Activated B cell treated with CpG ODN at 0.5 μM for 24 hours (primary cell): ENCODE measurements at regions of chr4 and their contacts with region 1.

Region 1: GRCh38 chr4:102535398-102536082 is 34.4 kb downstream of the NFKB1 start:
- DNase-seq: no peak
- ATAC-seq: peak; percentile 82
- H3K4me3 Mint-ChIP-seq: peak overlapping the region; percentile 55
- H3K27ac Mint-ChIP-seq: peak overlapping the region; percentile 71
- H3K4me1 Mint-ChIP-seq: peaks cover 40% of the 10 kb centered on the region
- H3K27me3 Mint-ChIP-seq: no peaks in the 10 kb centered on the region
- CTCF ChIP-seq: no peak

Region 2: DNA sequence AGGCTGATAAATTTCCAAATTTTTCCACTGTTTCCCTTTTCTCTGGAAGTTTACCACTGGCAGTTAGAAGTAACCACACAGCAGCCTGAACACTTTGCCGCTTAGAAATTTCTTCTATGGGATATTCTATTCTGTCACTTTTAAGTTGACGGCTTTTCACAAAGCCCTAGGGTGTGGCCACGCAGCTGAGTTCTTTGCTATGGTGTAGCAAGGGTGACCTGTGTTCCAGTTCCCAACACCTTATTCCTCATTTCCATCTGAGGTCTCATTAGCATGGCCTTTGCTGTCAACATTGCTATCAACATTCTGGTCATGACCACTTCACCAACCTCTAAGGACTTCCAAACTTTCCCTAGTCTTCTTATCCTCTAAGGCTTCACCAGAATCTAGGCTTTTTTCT is 79.8 kb before region 1 on chr4:
- CTCF ChIA-PET with region 1: no interaction called
- POLR2A ChIA-PET with region 1: no interaction called
- intact Hi-C with region 1: no loop called
- DNase-seq: no peak
- ATAC-seq: no peak
- H3K4me3 Mint-ChIP-seq: no peak overlapping the region
- H3K27ac Mint-ChIP-seq: no peak overlapping the region
- H3K4me1 Mint-ChIP-seq: peaks cover 12% of the 10 kb centered on the region
- H3K27me3 Mint-ChIP-seq: peaks cover 3% of the 10 kb centered on the region
- CTCF ChIP-seq: no peak

Region 3: DNA sequence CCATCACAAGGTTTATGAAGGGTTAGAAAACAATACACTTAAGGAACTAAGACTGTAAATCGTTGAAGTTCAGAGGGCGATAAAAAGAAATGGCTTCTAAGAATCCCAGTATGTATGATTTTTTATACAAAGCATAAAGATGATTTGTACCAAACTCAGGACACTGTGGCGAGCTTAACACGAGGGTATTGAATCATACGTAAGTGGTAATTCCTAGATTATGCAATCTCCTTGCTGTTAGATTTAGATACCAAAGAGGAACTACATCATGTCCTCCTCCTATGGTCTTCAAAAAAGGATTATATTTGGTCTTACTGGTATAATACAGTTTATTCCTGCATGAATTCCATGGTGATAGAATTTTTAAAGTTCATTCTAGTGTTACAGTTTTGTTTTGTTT is 10.4 kb before region 1 on chr4:
- CTCF ChIA-PET with region 1: no interaction called
- POLR2A ChIA-PET with region 1: interaction called, 8 read pairs
- intact Hi-C with region 1: loop called (anchors 1 kb)
- DNase-seq: no peak
- ATAC-seq: no peak
- H3K4me3 Mint-ChIP-seq: peak overlapping the region; percentile 46
- H3K27ac Mint-ChIP-seq: peak overlapping the region; percentile 50
- H3K4me1 Mint-ChIP-seq: peaks cover 88% of the 10 kb centered on the region
- H3K27me3 Mint-ChIP-seq: no peaks in the 10 kb centered on the region
- CTCF ChIP-seq: no peak

Region 4: GRCh38 chr4:102554482-102554881 is 18.9 kb after region 1 on chr4:
- CTCF ChIA-PET with region 1: no interaction called
- POLR2A ChIA-PET with region 1: interaction called, 3 read pairs
- intact Hi-C with region 1: loop called (anchors 2 kb)
- DNase-seq: no peak
- ATAC-seq: no peak
- H3K4me3 Mint-ChIP-seq: no peak overlapping the region
- H3K27ac Mint-ChIP-seq: peak overlapping the region; percentile 15
- H3K4me1 Mint-ChIP-seq: peaks cover 66% of the 10 kb centered on the region
- H3K27me3 Mint-ChIP-seq: no peaks in the 10 kb centered on the region
- CTCF ChIP-seq: no peak

Region 5: GRCh38 chr4:102584091-102584490 is 48.6 kb after region 1 on chr4:
- CTCF ChIA-PET with region 1: no interaction called
- POLR2A ChIA-PET with region 1: no interaction called
- intact Hi-C with region 1: no loop called
- DNase-seq: no peak
- ATAC-seq: no peak
- H3K4me3 Mint-ChIP-seq: no peak overlapping the region
- H3K27ac Mint-ChIP-seq: no peak overlapping the region
- H3K4me1 Mint-ChIP-seq: peaks cover 24% of the 10 kb centered on the region
- H3K27me3 Mint-ChIP-seq: no peaks in the 10 kb centered on the region
- CTCF ChIP-seq: no peak